Prostate gland (tissue), 2 donors: ENCODE measurements at regions of chrX and their contacts with region 1.

Region 1: GRCh38 chrX:75156021-75156945 is at the start of gene ABCB7:
- DNase-seq: peak; percentile 70
- H3K4me3 ChIP-seq: peak within 1 kb of the TSS; percentile 45 to 54
- H3K27ac ChIP-seq: peak within 1 kb of the TSS; percentile 67 to 77
- H3K4me1 ChIP-seq: no peaks in the 10 kb centered on the region
- H3K27me3 ChIP-seq: no peaks in the 10 kb centered on the region
- CTCF ChIP-seq: peak in 1 of 4 experiments; percentile 21
- POLR2A ChIP-seq: no peak
- total RNA-seq, gene ABCB7: 41.1 to 64.3 TPM

Region 2: GRCh38 chrX:74603040-74603439 is 553.2 kb before region 1 on chrX:
- intact Hi-C with region 1: loop called (anchors 10 kb)
- DNase-seq: no peak
- H3K4me3 ChIP-seq: no peak overlapping the region
- H3K27ac ChIP-seq: no peak overlapping the region
- H3K4me1 ChIP-seq: no peaks in the 10 kb centered on the region
- H3K27me3 ChIP-seq: no peaks in the 10 kb centered on the region
- CTCF ChIP-seq: no peak
- POLR2A ChIP-seq: no peak

Region 3: GRCh38 chrX:75211976-75212375 is 55.7 kb after region 1 on chrX:
- intact Hi-C with region 1: no loop called
- DNase-seq: no peak
- H3K4me3 ChIP-seq: no peak overlapping the region
- H3K27ac ChIP-seq: no peak overlapping the region
- H3K4me1 ChIP-seq: no peaks in the 10 kb centered on the region
- H3K27me3 ChIP-seq: no peaks in the 10 kb centered on the region
- CTCF ChIP-seq: no peak
- POLR2A ChIP-seq: no peak